Psoas muscle (tissue), 8 donors: ENCODE measurements at regions of chr16 and their contacts with region 1.

Region 1: DNA sequence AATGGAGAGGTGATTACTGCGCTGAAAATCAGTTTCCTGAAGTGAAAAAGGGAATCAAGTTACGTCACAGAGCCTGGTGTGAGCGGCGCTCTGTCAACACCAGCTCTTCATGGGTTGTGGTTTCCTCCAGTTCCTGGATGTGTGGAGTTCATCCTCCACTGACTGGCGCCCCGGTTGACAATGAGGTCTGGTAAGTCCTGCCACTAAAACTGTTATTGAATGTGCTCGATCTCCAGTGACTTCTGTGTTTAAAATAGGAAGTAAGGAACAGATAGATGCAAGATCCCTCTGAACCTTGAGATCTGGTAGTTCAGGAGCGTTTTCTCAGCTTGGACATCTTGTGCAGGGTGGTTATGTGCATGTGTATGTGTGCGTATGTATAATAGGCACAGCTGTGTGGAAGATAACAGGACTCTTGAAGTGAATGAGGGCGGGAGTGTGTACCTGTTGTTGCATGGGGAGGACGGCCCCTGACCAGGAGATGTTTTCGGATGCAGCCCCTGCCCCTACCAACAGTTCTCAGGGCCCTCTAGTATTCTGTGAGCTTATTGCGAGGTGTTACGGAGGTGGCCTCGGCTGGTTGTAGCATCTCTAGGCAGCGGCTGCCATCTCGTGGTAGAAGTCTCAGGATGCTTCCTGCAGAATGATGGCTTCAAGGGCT is 22.0 kb upstream of the GOT2 start:
- DNase-seq: peak; percentile 65 to 83
- ATAC-seq: peak; percentile 80 to 97 (median 86)
- H3K4me3 ChIP-seq: no peak overlapping the region
- H3K27ac ChIP-seq: no peak overlapping the region
- H3K4me1 ChIP-seq: no peaks in the 10 kb centered on the region
- H3K27me3 ChIP-seq: no peaks in the 10 kb centered on the region
- CTCF ChIP-seq: peak; percentile 67

Region 2: DNA sequence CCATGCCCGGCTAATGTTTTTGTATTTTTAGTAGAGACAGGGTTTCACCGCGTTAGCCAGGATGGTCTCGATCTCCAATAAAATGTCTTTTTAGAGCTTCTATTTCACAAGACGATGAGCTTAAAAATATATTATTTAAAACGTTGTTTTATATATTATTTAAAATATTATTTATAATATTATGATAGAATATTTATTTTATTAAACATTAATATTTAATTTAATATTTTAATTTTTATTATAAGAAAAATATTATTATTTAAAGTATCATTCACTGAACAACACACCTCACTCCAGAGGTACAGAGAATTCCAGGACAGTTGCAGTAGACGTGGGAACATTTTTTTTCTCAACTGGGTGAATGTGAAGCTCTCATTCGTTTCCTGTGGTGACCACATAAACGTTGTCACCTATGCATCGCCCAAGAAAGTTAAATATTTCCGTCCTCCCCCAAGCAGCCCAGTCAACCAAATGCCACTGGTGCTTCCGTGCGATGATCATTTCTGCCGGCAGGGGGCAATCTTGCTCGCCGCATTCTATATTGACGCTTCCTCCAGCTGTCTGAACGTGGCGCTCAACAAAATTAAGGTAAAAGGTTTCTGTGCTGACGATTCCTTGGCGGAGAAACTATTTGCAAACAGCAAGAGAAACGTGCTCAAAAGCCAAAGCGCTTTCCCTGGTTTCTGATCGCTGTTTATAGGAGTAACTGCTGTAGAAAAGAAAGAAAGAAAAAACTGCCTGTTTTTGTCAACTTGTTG is 419.6 kb before region 1 on chr16:
- intact Hi-C with region 1: loop called (anchors 5 to 10 kb)
- DNase-seq: peak; percentile 80 to 85
- ATAC-seq: peak; percentile 73 to 93 (median 80)
- H3K4me3 ChIP-seq: peak overlapping the region; percentile 48
- H3K27ac ChIP-seq: no peak overlapping the region
- H3K4me1 ChIP-seq: no peaks in the 10 kb centered on the region
- H3K27me3 ChIP-seq: no peaks in the 10 kb centered on the region
- CTCF ChIP-seq: peak; percentile 94

Region 3: GRCh38 chr16:58678716-58679115 is 77.4 kb before region 1 on chr16:
- intact Hi-C with region 1: loop called (anchors 2 to 5 kb)
- DNase-seq: peak; percentile 39 to 67
- ATAC-seq: peak; percentile 65 to 84 (median 80)
- H3K4me3 ChIP-seq: no peak overlapping the region
- H3K27ac ChIP-seq: no peak overlapping the region
- H3K4me1 ChIP-seq: peaks cover 8% of the 10 kb centered on the region
- H3K27me3 ChIP-seq: no peaks in the 10 kb centered on the region
- CTCF ChIP-seq: peak; percentile 41

Region 4: GRCh38 chr16:58684354-58685083 is 71.6 kb before region 1 on chr16 and contains the start of gene SLC38A7:
- intact Hi-C with region 1: loop called (anchors 2 to 5 kb)
- DNase-seq: peak; percentile 90 to 94
- ATAC-seq: peak; percentile 94 to 99 (median 96)
- H3K4me3 ChIP-seq: peak within 1 kb of the TSS; percentile 95
- H3K27ac ChIP-seq: peak within 1 kb of the TSS; percentile 89
- H3K4me1 ChIP-seq: peaks cover 10% of the 10 kb centered on the region
- H3K27me3 ChIP-seq: no peaks in the 10 kb centered on the region
- CTCF ChIP-seq: no peak
- total RNA-seq, gene SLC38A7: 6.6 to 12.6 (median 8.2) TPM

Region 5: GRCh38 chr16:58733671-58734458 is 22.3 kb before region 1 on chr16 and contains the start of gene GOT2:
- intact Hi-C with region 1: loop called in 1 of 2 experiments (anchors 1 kb)
- DNase-seq: peak; percentile 81 to 89
- ATAC-seq: peak; percentile 95 to 96 (median 96)
- H3K4me3 ChIP-seq: peak within 1 kb of the TSS; percentile 93
- H3K27ac ChIP-seq: peak within 1 kb of the TSS; percentile 85
- H3K4me1 ChIP-seq: peaks cover 42% of the 10 kb centered on the region
- H3K27me3 ChIP-seq: no peaks in the 10 kb centered on the region
- CTCF ChIP-seq: peak; percentile 86
- total RNA-seq, gene GOT2: 183 to 396 (median 274) TPM

Region 6: DNA sequence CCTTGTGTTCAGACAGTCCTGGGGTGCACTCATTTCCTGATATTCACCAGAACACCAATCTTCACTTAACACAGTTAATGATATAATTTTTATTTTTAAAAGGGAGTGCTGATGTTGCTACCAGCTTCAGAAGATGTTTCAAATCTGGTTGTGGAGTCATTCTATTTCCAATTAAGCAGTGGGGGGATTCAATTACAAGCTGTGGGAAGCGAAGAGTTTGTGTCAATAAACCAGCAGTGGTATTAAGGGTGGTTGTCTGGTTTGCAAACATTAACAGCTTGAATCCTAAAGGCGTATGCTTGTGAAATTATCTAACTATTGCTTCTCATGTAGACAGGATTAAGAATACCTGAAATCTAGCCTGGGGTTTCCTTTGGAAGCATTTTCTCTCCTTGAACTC is 1615.5 kb after region 1 on chr16:
- intact Hi-C with region 1: no loop called
- DNase-seq: no peak
- ATAC-seq: no peak
- H3K4me3 ChIP-seq: no peak overlapping the region
- H3K27ac ChIP-seq: no peak overlapping the region
- H3K4me1 ChIP-seq: no peaks in the 10 kb centered on the region
- H3K27me3 ChIP-seq: no peaks in the 10 kb centered on the region
- CTCF ChIP-seq: no peak